ENCODE measurements at regions of chr19 and their contacts with region 1.

Region 1: DNA sequence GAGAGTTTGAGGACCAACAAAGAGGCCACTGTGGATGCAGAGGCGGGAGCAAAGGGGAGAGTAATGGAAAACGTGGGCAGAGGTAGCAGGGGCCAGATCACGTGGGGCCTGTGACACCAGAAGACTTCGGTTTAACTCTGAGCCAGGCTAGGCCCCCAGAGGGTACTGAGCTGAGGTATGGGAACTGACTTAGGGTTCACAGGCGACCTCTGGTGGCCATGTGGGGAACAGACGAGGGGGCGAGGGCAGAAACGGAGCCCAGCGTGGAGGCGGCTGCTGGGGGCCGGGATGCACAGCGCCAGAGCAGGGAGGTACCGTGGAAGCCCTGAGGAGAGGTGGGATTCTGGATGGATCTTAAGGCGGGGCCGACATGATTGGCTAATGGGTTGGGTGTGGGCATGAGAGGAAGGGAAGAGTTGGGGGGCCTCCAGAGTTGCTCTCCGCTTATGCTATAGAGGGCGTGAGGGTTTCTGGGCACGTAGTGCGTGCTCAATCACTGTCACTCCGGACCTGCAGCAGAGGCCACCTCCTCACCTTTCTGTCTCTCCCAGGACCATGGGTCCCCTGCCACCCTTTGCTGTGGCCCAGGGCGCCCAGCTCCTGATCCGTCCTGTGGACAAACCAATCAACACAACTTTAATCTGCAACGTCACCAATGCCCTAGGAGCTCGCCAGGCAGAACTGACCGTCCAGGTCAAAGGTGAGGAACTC is 13.7 kb downstream of the PVR start:
- DNase-seq: no peak
- H3K4me3 ChIP-seq: no peak overlapping the region
- H3K27ac ChIP-seq: no peak overlapping the region
- H3K4me1 ChIP-seq: peaks cover 4 to 6% (median 5%) of the 10 kb centered on the region in 3 donors
- H3K27me3 ChIP-seq: no peaks in the 10 kb centered on the region
- CTCF ChIP-seq: peak; percentile 77 to 90 (median 80)
- POLR2A ChIP-seq: no peak

Region 2: DNA sequence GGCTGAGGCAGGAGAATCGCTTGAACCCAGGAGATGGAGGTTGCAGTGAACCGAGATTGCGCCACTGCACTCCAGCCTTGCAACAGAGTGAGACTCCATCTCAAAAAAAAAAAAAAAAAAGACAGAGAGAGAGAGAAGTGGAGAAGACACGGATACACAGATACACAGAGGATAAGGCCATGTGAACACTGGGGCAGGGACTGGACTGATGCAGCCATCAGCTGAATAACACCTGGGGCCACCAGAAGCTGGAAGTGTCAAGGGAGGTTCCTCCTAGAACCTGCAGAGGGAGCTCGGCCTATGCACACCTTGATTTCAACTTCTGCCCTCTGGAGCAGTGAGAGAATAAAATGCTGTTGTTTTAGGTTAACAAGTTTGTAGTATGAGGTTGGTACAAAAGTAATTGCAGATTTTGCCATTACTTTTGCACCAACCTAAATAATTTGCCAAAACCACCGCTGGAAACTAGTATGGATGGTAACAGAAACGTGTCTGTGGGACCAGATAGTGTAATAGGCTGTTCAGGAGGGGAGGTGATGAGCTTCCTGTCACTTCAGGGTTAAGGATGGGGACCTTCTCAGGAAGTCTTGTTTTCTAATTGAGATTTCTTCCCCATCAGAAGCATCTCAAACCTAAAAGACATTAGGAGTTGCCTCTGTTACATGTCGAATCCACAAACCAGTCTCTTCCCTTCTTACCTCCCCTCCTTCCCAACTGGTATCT is 80.4 kb before region 1 on chr19:
- intact Hi-C with region 1: loop called (anchors 5 kb)
- DNase-seq: no peak
- H3K4me3 ChIP-seq: no peak overlapping the region
- H3K27ac ChIP-seq: no peak overlapping the region
- H3K4me1 ChIP-seq: no peaks in the 10 kb centered on the region
- H3K27me3 ChIP-seq: peaks cover 0 to 2% (median 0%) of the 10 kb centered on the region in 4 donors
- CTCF ChIP-seq: peak in 5 of 6 experiments; percentile 37 to 74 (median 42)
- POLR2A ChIP-seq: no peak

Region 3: DNA sequence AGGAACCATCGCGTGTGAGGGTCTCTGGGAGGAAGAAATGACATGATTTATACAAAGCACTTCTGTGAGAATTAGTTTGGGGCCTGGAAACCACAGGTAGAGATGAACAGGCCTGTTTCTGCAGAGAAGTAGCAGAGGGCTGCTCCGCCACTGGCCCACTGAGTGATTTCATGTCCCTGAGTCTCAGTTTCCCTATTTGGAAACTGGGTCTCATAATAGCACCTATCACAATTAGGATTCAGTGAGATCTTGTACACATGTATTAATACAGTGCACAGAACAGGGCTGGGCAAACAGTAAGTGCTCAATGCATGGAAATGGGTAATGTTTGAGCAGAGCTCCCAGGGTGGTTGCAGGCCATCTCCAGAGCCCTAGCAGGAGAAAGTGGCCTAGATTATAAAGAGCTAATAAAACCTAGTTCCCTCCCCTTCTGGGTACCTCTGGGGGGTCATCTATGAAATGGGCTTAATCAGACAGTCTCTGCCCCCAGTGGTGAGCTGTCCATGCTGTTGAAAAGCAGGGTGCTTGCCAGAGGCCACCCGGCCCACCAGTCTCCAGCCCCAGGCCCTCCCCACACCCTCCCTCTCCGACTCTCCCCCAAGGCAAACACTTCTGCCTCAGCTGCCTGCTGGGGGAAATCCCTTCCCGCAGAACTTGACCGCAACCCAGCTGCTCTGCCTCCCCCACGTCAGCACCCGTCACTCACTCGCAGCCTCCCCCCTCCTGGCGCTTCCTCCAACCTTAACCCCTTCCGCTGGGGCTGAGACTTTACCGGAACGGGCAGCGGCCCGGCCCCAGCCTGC is 95.7 kb after region 1 on chr19:
- intact Hi-C with region 1: no loop called
- DNase-seq: peak; percentile 83
- H3K4me3 ChIP-seq: peak overlapping the region; percentile 22 to 70 (median 58)
- H3K27ac ChIP-seq: peak overlapping the region; percentile 90 to 100 (median 95)
- H3K4me1 ChIP-seq: peaks cover 68 to 95% (median 72%) of the 10 kb centered on the region in 3 donors
- H3K27me3 ChIP-seq: no peaks in the 10 kb centered on the region
- CTCF ChIP-seq: peak in 1 of 6 experiments; percentile 18
- POLR2A ChIP-seq: peak in 1 of 4 donors; percentile 54

Region 4: GRCh38 chr19:45079063-45079910 is 421.9 kb after region 1 on chr19 and contains the start of gene GEMIN7:
- intact Hi-C with region 1: no loop called
- DNase-seq: no peak
- H3K4me3 ChIP-seq: peak within 1 kb of the TSS; percentile 54 to 92 (median 63)
- H3K27ac ChIP-seq: peak within 1 kb of the TSS; percentile 67 to 83 (median 80)
- H3K4me1 ChIP-seq: peaks cover 36 to 62% (median 38%) of the 10 kb centered on the region in 3 donors
- H3K27me3 ChIP-seq: no peaks in the 10 kb centered on the region
- CTCF ChIP-seq: peak in 4 of 6 experiments; percentile 14 to 41 (median 20)
- POLR2A ChIP-seq: peak in 2 of 4 donors; percentile 28 to 30
- total RNA-seq, gene GEMIN7: 22.3 to 28.0 (median 25.4) TPM